ENCODE measurements at regions of chr2 and their contacts with region 1.

Region 1: DNA sequence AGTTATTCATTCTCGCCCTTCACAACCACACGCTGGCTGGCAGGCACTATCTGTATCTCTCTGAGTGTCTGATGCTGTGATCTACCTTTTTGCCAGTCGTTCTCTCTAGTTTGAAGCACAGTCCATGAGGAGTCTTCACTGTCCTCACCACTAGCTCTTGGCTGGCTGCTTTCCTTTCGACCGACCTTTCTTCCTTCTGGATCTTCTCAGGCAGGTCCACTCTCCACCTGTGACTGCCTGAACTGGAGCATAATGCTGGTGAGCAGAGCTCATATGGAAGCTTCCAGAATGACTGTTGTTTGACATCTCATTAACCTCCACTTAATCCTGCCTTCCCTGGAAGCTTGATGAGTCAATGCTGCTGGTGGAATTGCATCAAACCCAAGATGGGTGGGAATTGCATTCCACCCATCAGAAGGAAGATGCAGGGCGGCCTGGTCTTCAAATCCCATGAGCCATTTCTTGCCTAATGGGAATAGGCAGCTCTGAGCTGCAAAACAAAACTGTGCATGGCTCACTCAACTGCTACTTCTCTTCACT is 283.5 kb upstream of the HDAC4 start:
- DNase-seq: no peak
- H3K4me3 ChIP-seq: no peak overlapping the region
- H3K27ac ChIP-seq: no peak overlapping the region
- H3K4me1 ChIP-seq: no peaks in the 10 kb centered on the region
- H3K27me3 ChIP-seq: no peaks in the 10 kb centered on the region
- CTCF ChIP-seq: no peak

Region 2: DNA sequence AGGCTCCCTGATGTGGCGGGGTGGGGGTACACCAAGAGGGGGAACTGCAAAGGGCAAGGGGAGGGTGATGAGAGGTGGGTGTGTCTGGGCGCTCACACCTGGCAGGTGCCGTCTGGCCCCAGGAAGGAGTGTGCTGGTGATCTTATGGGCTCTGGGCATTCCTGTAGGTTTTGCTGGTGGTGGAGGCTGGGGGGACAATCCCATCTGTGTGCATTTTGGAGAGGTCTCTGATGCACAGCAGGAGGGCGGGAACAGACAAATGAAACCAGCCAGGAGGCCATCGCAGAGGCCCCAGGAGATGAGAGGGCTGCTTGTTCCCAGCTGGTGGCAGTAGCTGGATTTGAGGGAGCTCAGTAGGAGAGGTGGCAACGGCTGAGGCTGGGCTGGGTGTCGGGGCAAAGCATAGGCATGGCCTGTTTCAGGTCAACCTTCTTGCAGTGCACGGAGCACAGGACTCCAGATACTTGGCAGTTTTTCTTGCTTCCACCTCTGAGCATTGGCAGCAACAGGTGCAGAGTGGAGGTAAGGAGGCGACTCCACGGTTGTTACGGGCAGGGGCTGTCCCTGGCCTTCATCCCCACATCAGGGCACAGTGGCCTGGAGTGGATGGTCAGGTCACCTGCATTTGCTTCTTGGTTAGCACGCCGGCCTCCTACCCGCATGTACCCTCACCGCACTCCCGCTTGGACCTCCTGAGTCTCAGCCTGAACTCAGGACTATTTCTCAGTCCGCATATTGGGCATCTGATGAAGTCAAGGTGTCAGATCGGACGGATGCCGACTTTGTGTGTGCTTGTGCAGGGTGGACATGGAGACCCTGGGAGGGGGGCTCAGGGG is 89.3 kb before region 1 on chr2:
- CTCF ChIA-PET with region 1: no interaction called
- dilution Hi-C with region 1: loop called (anchors 5 kb)
- in situ Hi-C with region 1: no loop called
- intact Hi-C with region 1: no loop called
- DNase-seq: no peak
- H3K4me3 ChIP-seq: no peak overlapping the region
- H3K27ac ChIP-seq: no peak overlapping the region
- H3K4me1 ChIP-seq: no peaks in the 10 kb centered on the region
- H3K27me3 ChIP-seq: no peaks in the 10 kb centered on the region
- CTCF ChIP-seq: no peak

Region 3: DNA sequence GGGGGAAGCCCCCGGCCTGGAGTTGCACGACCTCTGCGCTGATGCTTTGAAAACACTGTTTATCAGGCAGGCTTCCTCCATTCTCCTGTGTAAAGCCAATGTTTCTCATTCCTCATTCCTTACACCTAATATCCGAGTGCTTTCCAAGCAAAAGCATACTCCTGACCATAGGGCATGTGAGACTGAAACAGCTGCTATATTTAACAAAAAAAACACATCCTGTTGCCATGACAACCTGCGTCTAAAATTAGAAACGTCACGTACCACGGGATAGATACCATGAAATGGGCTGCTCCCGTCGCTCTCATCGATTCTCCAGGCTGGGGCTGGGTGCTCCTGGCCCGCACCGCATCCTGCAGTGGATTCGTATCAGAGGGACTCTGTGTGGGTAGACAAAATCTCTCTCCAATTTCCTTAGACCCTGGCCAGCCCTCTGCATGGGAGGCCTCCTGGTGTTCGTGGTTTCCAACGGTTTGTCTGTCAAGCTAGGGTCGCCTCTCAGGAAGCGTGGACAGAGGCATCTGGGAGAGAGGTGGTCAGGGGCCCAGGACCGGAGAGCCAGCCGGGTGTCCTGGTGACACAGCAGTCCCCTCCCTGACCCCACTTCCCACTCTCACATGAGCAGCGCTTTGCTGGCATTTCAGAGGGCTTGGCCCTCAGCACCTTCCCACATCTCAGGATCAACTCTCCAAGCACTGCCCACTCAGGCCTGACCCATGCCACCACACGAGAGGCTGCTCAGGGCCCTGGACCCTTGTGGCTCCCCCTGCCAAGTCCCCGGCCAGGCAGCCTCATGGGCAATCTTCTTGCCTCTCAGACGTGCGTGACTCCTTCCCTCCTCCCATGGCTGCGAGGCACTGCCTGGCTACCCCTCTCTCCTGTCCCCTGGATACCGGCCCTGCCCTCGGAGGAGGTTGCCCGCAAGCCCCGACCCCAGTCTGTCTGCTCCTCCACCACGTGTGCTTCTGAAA is 72.7 kb after region 1 on chr2:
- CTCF ChIA-PET with region 1: no interaction called
- dilution Hi-C with region 1: no loop called
- in situ Hi-C with region 1: no loop called
- intact Hi-C with region 1: no loop called
- DNase-seq: no peak
- H3K4me3 ChIP-seq: no peak overlapping the region
- H3K27ac ChIP-seq: no peak overlapping the region
- H3K4me1 ChIP-seq: no peaks in the 10 kb centered on the region
- H3K27me3 ChIP-seq: no peaks in the 10 kb centered on the region
- CTCF ChIP-seq: no peak

Region 4: GRCh38 chr2:239778042-239778851 is 93.9 kb after region 1 on chr2:
- CTCF ChIA-PET with region 1: no interaction called
- dilution Hi-C with region 1: no loop called
- in situ Hi-C with region 1: no loop called
- intact Hi-C with region 1: no loop called
- DNase-seq: no peak
- H3K4me3 ChIP-seq: no peak overlapping the region
- H3K27ac ChIP-seq: no peak overlapping the region
- H3K4me1 ChIP-seq: no peaks in the 10 kb centered on the region
- H3K27me3 ChIP-seq: no peaks in the 10 kb centered on the region
- CTCF ChIP-seq: no peak

Region 5: DNA sequence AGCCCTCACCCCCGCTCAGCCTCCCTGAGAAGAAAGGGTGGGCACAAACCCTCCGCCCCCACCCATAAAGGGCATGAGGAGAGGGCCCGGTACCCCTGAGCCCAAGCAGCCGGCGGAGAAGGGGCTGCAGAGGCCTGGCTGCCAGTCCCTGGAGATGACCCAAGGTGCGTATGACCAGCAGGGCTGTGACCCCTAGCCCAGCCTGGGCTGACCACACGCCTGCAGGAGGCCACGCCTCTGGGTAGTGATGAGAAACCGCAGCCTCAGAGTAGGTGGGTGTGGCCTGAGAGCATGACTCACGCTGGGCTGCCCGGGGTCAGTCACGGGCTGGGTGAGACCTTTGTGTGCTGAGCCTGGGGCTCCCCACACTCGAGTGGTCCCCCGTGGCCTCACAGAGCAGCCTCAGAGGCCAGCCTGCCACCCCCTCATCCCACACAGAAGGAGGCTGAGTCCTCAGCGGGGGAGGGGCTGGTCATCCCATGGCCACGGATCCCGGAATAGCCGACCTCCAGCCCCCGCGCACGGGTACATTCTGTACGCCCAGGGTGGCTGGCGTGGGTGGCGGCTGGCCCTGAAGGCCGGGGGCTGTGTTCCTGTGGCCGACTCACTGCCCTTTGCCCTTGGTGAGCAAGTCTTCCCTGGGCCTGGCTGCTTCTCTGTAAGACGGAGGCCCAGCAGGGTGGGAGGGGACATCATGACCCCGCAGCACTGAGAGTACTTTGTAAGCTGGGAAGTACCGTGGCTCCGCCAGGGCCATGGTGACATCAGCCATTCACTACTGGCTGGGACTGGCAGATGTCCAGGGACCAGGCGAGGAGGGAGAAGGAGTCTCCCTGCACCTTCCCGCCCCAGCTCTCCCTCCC is 566.9 kb after region 1 on chr2:
- CTCF ChIA-PET with region 1: no interaction called
- dilution Hi-C with region 1: no loop called
- in situ Hi-C with region 1: no loop called
- intact Hi-C with region 1: no loop called
- DNase-seq: peak; percentile 83
- H3K4me3 ChIP-seq: peak overlapping the region in 2 of 3 experiments; percentile 21 to 33
- H3K27ac ChIP-seq: peak overlapping the region; percentile 30
- H3K4me1 ChIP-seq: peaks cover 35% of the 10 kb centered on the region
- H3K27me3 ChIP-seq: no peaks in the 10 kb centered on the region
- CTCF ChIP-seq: no peak

Region 6: GRCh38 chr2:240308111-240308651 is 623.8 kb after region 1 on chr2:
- CTCF ChIA-PET with region 1: no interaction called
- dilution Hi-C with region 1: no loop called
- in situ Hi-C with region 1: no loop called
- intact Hi-C with region 1: no loop called
- DNase-seq: no peak
- H3K4me3 ChIP-seq: no peak overlapping the region
- H3K27ac ChIP-seq: no peak overlapping the region
- H3K4me1 ChIP-seq: no peaks in the 10 kb centered on the region
- H3K27me3 ChIP-seq: no peaks in the 10 kb centered on the region
- CTCF ChIP-seq: no peak